ENCODE measurements at regions of chr1 and their contacts with region 1.

Region 1: DNA sequence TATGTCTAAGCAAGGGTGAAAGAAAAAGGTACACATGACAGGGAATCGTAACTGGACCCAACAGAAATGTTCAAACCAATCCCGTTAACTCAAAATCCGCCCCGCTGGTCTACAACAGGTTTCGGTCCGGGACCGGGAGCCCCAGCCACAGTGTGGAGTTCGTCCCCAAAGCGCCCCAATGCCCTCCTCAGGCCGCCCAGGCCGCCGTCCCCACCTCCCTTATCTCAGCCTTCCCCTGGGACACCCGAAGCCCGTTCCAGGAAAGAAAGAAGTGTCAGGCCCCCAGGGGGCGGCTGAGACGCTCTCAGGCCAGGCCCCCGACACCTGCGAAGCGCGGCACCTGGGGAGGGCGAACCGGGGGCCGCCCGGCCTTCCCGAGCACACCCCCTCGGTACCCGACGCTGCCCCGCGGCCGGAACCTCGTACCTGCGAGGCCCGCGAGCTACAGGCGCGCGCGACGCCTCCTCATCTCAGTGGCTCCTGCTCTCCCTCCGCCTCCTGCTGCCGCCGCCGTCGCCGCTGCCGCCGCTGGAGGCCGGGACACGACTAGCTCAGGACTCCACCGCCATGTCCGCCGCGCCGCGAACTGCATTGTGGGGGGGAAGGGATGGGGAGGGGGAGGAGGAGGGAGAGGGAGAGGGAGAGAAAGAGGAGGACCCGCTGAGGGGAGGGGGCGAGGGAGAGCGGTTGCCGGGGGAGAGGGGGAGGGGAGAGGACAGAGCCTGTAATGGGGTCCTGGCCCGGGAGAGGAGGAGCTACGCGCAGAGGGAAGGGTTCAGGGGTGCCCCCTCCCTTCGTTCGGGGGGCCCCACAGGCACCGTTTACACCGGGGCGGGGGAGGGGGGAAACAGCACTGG is at the start of gene TUT4:
- DNase-seq: peak; percentile 74
- ATAC-seq: peak; percentile 53
- H3K4me3 Mint-ChIP-seq: no peak within 1 kb of the TSS
- H3K27ac Mint-ChIP-seq: peak within 1 kb of the TSS; percentile 83
- H3K4me1 Mint-ChIP-seq: peaks cover 39% of the 10 kb centered on the region
- H3K27me3 Mint-ChIP-seq: no peaks in the 10 kb centered on the region
- CTCF ChIP-seq: no peak
- total RNA-seq, gene TUT4: 143 and 158 TPM in 2 replicates

Region 2: GRCh38 chr1:52033190-52034049 is 519.3 kb before region 1 on chr1 and contains the start of gene KTI12:
- CTCF ChIA-PET with region 1: no interaction called
- POLR2A ChIA-PET with region 1: interaction called, 11 read pairs
- intact Hi-C with region 1: no loop called
- DNase-seq: peak; percentile 76
- ATAC-seq: peak; percentile 89
- H3K4me3 Mint-ChIP-seq: peak within 1 kb of the TSS; percentile 93
- H3K27ac Mint-ChIP-seq: peak within 1 kb of the TSS; percentile 89
- H3K4me1 Mint-ChIP-seq: peaks cover 34% of the 10 kb centered on the region
- H3K27me3 Mint-ChIP-seq: no peaks in the 10 kb centered on the region
- CTCF ChIP-seq: no peak
- total RNA-seq, gene KTI12: 18.4 and 18.8 TPM in 2 replicates

Region 3: GRCh38 chr1:52416811-52417210 is 135.9 kb before region 1 on chr1:
- CTCF ChIA-PET with region 1: no interaction called
- POLR2A ChIA-PET with region 1: interaction called, 11 read pairs
- intact Hi-C with region 1: no loop called
- DNase-seq: no peak
- ATAC-seq: no peak
- H3K4me3 Mint-ChIP-seq: no peak overlapping the region
- H3K27ac Mint-ChIP-seq: no peak overlapping the region
- H3K4me1 Mint-ChIP-seq: no peaks in the 10 kb centered on the region
- H3K27me3 Mint-ChIP-seq: no peaks in the 10 kb centered on the region
- CTCF ChIP-seq: no peak

Region 4: DNA sequence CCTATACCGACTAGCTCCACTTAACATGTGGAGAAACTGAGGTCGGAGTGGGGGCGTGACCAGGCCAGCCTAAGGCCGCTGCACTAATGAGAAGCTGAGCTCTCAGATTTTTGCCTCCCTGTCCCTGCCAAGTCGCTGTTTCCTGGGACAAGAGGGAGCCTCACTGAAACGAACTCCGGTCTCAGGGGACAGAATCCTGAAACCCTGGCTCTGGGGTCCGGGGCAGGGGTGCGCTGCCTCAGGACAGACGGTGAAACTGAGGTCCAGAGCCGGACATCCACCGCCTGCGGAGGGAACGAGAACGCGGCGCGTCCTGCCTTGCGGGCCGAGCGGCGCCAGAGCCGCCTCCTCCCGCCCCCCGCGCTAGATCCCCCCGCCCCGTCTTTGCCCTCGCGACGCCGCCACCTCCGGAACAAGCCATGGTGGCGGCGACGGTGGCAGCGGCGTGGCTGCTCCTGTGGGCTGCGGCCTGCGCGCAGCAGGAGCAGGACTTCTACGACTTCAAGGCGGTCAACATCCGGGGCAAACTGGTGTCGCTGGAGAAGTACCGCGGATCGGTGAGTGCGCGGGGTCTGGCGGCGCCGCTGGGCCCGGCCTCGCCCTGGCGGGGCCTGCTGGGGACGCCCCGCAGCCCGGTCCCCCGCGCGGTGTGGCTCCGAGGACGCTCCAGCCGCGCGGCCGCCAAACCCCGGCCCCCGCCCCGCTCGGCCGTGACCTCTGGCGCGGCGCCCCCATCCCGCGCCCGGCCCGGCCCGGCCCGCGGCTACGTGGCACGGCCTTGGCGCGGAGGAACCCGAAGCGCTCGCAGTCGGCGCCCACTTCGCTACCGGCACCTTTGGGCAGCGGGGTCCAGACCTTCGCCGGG is 49.5 kb after region 1 on chr1 and contains the start of gene GPX7:
- CTCF ChIA-PET with region 1: no interaction called
- POLR2A ChIA-PET with region 1: interaction called, 31 read pairs
- intact Hi-C with region 1: no loop called
- DNase-seq: peak; percentile 57
- ATAC-seq: peak; percentile 75
- H3K4me3 Mint-ChIP-seq: peak within 1 kb of the TSS; percentile 84
- H3K27ac Mint-ChIP-seq: peak within 1 kb of the TSS; percentile 84
- H3K4me1 Mint-ChIP-seq: peaks cover 55% of the 10 kb centered on the region
- H3K27me3 Mint-ChIP-seq: no peaks in the 10 kb centered on the region
- CTCF ChIP-seq: no peak
- total RNA-seq, gene GPX7: 20.9 and 22.4 TPM in 2 replicates

Region 5: GRCh38 chr1:52669696-52670095 is 117.0 kb after region 1 on chr1:
- CTCF ChIA-PET with region 1: interaction called, 5 read pairs
- POLR2A ChIA-PET with region 1: interaction called, 10 read pairs
- intact Hi-C with region 1: no loop called
- DNase-seq: no peak
- ATAC-seq: no peak
- H3K4me3 Mint-ChIP-seq: no peak overlapping the region
- H3K27ac Mint-ChIP-seq: peak overlapping the region; percentile 22
- H3K4me1 Mint-ChIP-seq: peaks cover 16% of the 10 kb centered on the region
- H3K27me3 Mint-ChIP-seq: no peaks in the 10 kb centered on the region
- CTCF ChIP-seq: no peak

Region 6: GRCh38 chr1:52920791-52921291 is 368.1 kb after region 1 on chr1:
- CTCF ChIA-PET with region 1: no interaction called
- POLR2A ChIA-PET with region 1: interaction called, 11 read pairs
- intact Hi-C with region 1: no loop called
- DNase-seq: no peak
- ATAC-seq: no peak
- H3K4me3 Mint-ChIP-seq: peak overlapping the region; percentile 85
- H3K27ac Mint-ChIP-seq: no peak overlapping the region
- H3K4me1 Mint-ChIP-seq: peaks cover 18% of the 10 kb centered on the region
- H3K27me3 Mint-ChIP-seq: peaks cover 2% of the 10 kb centered on the region
- CTCF ChIP-seq: no peak

Measured in activated B cell treated with CpG ODN at 0.5 μM for 24 hours (primary cell).